ENCODE measurements at regions of chr9 and their contacts with region 1.

Region 1: DNA sequence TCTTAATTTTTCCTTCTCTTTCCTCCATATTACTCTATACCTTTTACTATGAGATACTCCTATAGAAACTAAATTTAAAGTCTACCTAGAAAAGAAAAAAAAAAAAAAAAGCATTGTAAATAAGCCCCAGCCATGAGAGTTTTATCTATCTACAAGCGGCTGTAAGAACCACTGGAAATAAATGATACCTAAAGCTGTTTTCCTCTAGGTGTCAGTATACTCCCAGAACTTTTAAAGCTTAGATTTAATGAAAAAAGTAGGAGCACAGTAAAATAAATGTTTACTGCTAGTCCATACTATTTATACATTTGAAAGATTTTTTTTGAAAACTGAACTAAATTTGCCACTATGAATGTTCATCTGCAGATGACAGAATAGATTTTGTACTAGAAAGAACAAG is 26.2 kb downstream of the TYRP1 start:
- DNase-seq: no peak
- H3K4me3 ChIP-seq: no peak overlapping the region
- H3K4me3 Mint-ChIP-seq: no peak overlapping the region
- H3K27ac Mint-ChIP-seq: no peak overlapping the region
- H3K4me1 ChIP-seq: no peaks in the 10 kb centered on the region
- H3K4me1 Mint-ChIP-seq: no peaks in the 10 kb centered on the region
- H3K27me3 ChIP-seq: no peaks in the 10 kb centered on the region
- H3K27me3 Mint-ChIP-seq: peaks cover 3% of the 10 kb centered on the region
- CTCF ChIP-seq: peak in 1 of 2 experiments; percentile 36

Region 2: DNA sequence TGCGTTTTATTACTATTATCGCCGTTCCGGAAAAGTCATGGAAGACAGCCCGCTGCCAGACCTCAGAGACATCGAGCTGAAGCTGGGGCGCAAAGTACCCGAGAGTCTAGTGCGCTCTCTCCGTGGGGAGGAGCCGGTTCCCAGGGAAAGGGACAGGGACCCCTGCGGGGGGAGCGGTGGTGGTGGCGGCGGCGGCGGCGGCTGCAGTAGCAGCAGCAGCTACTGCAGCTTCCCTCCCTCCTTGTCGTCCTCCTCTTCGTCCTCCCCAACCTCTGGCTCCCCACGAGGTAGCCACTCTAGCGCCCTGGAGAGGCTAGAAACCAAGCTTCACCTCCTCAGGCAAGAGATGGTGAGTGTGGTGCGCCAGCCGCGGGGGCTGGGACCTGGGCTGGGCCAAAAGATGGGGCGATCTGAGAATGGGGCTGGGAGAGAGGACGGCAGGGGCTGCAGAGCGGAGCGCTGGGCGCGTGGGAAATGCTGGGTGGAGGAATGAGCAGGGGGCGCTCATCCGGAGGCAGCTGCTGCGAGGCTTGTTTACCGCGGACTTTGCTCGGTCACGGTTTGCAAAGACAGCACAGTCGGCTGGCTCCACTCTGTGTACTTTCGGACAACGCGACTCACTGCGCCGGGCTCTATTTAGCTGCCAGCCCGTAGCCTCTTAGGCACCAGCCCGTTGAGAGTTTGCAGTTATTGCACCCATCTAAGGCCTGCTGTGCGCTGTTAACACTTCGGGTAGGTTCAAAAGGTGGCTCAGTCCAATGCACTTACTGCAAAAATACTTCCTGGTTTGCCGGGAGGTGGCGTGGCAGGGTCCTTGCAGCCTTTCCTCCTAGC is 56.5 kb after region 1 on chr9:
- CTCF ChIA-PET with region 1: interaction called, 3 read pairs
- POLR2A ChIA-PET with region 1: no interaction called
- intact Hi-C with region 1: loop called (anchors 5 kb)
- DNase-seq: peak; percentile 62
- H3K4me3 ChIP-seq: peak overlapping the region; percentile 49
- H3K4me3 Mint-ChIP-seq: peak overlapping the region; percentile 89
- H3K27ac Mint-ChIP-seq: no peak overlapping the region
- H3K4me1 ChIP-seq: no peaks in the 10 kb centered on the region; the same call in 1 of the 2 replicates
- H3K4me1 Mint-ChIP-seq: no peaks in the 10 kb centered on the region
- H3K27me3 ChIP-seq: no peaks in the 10 kb centered on the region
- H3K27me3 Mint-ChIP-seq: no peaks in the 10 kb centered on the region
- CTCF ChIP-seq: peak in 1 of 2 experiments; percentile 33

Region 3: GRCh38 chr9:12819436-12820185 is 100.2 kb after region 1 on chr9:
- CTCF ChIA-PET with region 1: no interaction called
- POLR2A ChIA-PET with region 1: no interaction called
- intact Hi-C with region 1: loop called (anchors 2 kb)
- DNase-seq: peak in 1 of 2 experiments; percentile 19
- H3K4me3 ChIP-seq: no peak overlapping the region
- H3K4me3 Mint-ChIP-seq: no peak overlapping the region
- H3K27ac Mint-ChIP-seq: no peak overlapping the region
- H3K4me1 ChIP-seq: no peaks in the 10 kb centered on the region
- H3K4me1 Mint-ChIP-seq: no peaks in the 10 kb centered on the region
- H3K27me3 ChIP-seq: no peaks in the 10 kb centered on the region
- H3K27me3 Mint-ChIP-seq: no peaks in the 10 kb centered on the region
- CTCF ChIP-seq: peak; percentile 26 to 31

Region 4: DNA sequence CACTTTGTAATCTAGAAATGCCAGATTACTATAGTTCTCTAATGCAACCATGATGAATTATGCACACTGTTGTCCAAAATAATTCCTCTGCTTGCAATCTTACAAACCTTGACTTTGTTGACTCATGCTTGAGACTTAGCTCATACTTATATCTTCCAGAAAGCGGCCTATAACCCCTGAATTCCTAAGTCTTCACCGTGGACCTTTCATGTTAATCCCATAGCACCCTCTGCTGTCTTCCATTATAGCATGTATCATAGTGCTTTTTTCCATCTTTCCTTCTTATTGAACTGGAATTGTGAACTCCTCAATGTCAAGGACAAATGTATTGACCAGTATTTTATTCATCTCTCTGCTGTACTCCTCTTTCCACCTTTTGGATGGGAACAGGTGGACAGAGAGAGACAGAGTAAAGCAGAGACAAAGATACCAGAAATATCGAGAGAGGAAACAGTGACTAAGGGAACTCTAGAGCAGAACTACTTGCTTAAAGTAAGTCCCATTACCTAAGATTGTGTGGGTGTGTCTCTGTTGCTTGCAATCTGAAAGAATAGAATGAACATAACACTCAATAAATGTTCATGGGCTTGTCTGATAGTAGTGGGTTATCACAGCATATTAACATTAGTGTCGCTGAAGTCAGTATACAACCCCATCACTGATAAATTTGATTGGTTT is 165.4 kb after region 1 on chr9:
- CTCF ChIA-PET with region 1: interaction called, 4 read pairs
- POLR2A ChIA-PET with region 1: no interaction called
- intact Hi-C with region 1: loop called (anchors 1 kb)
- DNase-seq: peak in 1 of 2 experiments; percentile 5
- H3K4me3 ChIP-seq: no peak overlapping the region
- H3K4me3 Mint-ChIP-seq: no peak overlapping the region
- H3K27ac Mint-ChIP-seq: no peak overlapping the region
- H3K4me1 ChIP-seq: no peaks in the 10 kb centered on the region
- H3K4me1 Mint-ChIP-seq: no peaks in the 10 kb centered on the region
- H3K27me3 ChIP-seq: no peaks in the 10 kb centered on the region
- H3K27me3 Mint-ChIP-seq: no peaks in the 10 kb centered on the region
- CTCF ChIP-seq: peak in 1 of 2 experiments; percentile 31

Region 5: DNA sequence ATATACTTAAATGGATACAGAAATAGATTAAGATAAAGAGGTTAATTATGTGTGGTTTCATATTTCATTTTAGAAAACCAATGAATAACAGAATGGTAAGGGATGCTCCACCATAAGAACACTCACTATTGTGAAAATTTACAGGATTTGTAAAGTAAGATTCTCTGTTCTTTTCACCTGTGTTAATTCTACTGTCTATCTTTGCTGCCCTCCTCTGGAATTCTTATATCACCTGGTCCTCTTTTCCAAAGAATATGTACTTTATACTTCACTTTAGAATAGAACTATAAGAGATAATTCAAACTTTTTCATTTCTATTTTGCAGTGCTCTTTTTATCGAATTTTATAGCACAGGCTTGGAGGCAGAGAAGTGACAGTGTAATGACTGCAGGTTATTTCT is 268.8 kb after region 1 on chr9:
- CTCF ChIA-PET with region 1: no interaction called
- POLR2A ChIA-PET with region 1: no interaction called
- intact Hi-C with region 1: loop called (anchors 5 kb)
- DNase-seq: no peak
- H3K4me3 ChIP-seq: no peak overlapping the region
- H3K4me3 Mint-ChIP-seq: no peak overlapping the region
- H3K27ac Mint-ChIP-seq: no peak overlapping the region
- H3K4me1 ChIP-seq: no peaks in the 10 kb centered on the region
- H3K4me1 Mint-ChIP-seq: no peaks in the 10 kb centered on the region
- H3K27me3 ChIP-seq: no peaks in the 10 kb centered on the region
- H3K27me3 Mint-ChIP-seq: no peaks in the 10 kb centered on the region
- CTCF ChIP-seq: no peak

Region 6: GRCh38 chr9:13088720-13089427 is 369.4 kb after region 1 on chr9:
- CTCF ChIA-PET with region 1: no interaction called
- POLR2A ChIA-PET with region 1: no interaction called
- intact Hi-C with region 1: loop called (anchors 5 kb)
- DNase-seq: peak in 1 of 2 experiments; percentile 27
- H3K4me3 ChIP-seq: no peak overlapping the region
- H3K4me3 Mint-ChIP-seq: no peak overlapping the region
- H3K27ac Mint-ChIP-seq: no peak overlapping the region
- H3K4me1 ChIP-seq: no peaks in the 10 kb centered on the region
- H3K4me1 Mint-ChIP-seq: peaks cover 6% of the 10 kb centered on the region
- H3K27me3 ChIP-seq: no peaks in the 10 kb centered on the region
- H3K27me3 Mint-ChIP-seq: peaks cover 2% of the 10 kb centered on the region
- CTCF ChIP-seq: peak; percentile 49 to 54

Measured in Caco-2 (cell line).